WTC11 (cell line): ENCODE measurements at regions of chr1 and their contacts with region 1.

Region 1: DNA sequence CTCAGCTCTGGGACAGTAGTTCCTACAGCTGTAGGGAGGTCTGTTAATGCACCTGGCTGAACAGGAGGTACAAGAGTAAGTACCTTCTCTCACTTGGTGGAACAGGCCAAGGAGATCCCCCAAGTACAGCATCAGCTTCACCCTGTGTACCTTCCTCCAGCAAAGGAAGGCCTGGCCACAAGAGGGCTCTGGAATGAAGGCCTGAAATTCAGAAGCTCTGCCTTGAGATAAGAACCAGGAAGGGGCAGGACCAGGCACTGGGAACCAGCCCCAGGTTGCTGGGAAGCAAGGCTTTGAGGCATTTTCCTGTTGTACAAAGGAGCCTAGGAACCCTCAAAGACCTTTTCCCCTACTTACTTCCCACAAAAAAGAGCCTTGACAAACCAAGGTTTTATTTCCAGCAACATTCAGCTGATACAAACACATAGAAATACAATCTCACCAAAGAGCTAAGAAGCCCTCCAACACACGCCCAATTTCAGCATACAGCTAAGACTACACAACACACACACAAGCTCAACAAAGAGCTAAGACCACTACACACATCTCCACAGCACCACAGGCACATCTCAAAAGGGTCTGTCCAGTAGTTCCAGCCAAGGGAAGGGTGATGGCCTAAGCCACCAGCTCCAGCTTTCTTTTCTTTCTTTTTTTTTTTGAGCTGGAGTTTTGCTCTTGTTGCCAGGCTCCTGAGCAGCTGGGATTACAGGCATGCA is 23.5 kb downstream of the F11R start:
- DNase-seq: peak; percentile 64
- ATAC-seq: peak; percentile 93
- H3K4me3 Mint-ChIP-seq: no peak overlapping the region
- H3K27ac Mint-ChIP-seq: peak overlapping the region; percentile 63
- H3K4me1 Mint-ChIP-seq: peaks cover 5% of the 10 kb centered on the region
- H3K27me3 Mint-ChIP-seq: no peaks in the 10 kb centered on the region
- CTCF ChIP-seq: no peak

Region 2: GRCh38 chr1:160911441-160911840 is 86.0 kb before region 1 on chr1:
- CTCF ChIA-PET with region 1: no interaction called
- POLR2A ChIA-PET with region 1: no interaction called
- DNase-seq: no peak
- ATAC-seq: no peak
- H3K4me3 Mint-ChIP-seq: no peak overlapping the region
- H3K27ac Mint-ChIP-seq: no peak overlapping the region
- H3K4me1 Mint-ChIP-seq: peaks cover 22% of the 10 kb centered on the region
- H3K27me3 Mint-ChIP-seq: no peaks in the 10 kb centered on the region; the same call in 1 of the 2 replicates
- CTCF ChIP-seq: no peak

Region 3: GRCh38 chr1:161013488-161014230 is 16.2 kb after region 1 on chr1:
- CTCF ChIA-PET with region 1: interaction called, 11 read pairs
- POLR2A ChIA-PET with region 1: interaction called, 10 read pairs
- DNase-seq: peak; percentile 79
- ATAC-seq: peak; percentile 93
- H3K4me3 Mint-ChIP-seq: peak overlapping the region; percentile 57
- H3K27ac Mint-ChIP-seq: peak overlapping the region; percentile 98
- H3K4me1 Mint-ChIP-seq: peaks cover 63% of the 10 kb centered on the region
- H3K27me3 Mint-ChIP-seq: no peaks in the 10 kb centered on the region
- CTCF ChIP-seq: no peak

Region 4: GRCh38 chr1:161021165-161021960 is 23.9 kb after region 1 on chr1:
- CTCF ChIA-PET with region 1: interaction called, 40 read pairs
- POLR2A ChIA-PET with region 1: interaction called, 18 read pairs
- DNase-seq: peak; percentile 99
- ATAC-seq: peak; percentile 96
- H3K4me3 Mint-ChIP-seq: peak overlapping the region; percentile 87
- H3K27ac Mint-ChIP-seq: peak overlapping the region; percentile 100
- H3K4me1 Mint-ChIP-seq: peaks cover 50% of the 10 kb centered on the region
- H3K27me3 Mint-ChIP-seq: no peaks in the 10 kb centered on the region
- CTCF ChIP-seq: no peak

Region 5: DNA sequence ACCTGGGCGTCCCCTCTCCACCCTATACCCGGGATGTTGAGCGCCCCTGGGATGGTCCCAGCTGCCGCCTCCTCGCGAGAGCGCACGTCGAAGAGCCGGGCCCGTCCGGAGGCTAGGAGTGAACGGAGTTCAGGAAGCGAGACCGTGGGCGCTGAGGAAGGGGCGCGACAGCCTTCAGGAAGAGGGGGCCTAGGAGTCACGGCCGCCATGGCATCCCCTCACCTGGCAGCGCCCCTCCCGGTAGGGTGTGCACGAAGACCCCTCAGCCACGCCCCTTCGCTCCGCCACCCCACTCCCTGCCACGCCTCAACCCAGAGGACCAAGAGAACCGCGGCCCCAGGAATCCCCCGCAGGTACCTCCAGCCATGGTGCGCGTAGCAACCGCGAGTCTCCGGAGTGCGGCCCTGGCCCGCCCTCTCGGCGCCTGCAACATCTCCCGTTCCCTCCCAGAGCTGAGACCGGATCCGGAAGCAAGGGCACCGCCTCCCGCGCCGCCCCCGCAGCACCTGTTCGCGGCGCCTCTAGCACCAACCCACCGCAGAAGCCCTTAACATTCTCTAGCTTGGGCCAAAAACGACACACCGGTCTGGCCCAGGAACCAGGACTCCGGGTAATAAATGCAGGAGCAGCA is 41.2 kb after region 1 on chr1 and contains the start of gene TSTD1:
- CTCF ChIA-PET with region 1: interaction called, 22 read pairs
- POLR2A ChIA-PET with region 1: no interaction called
- DNase-seq: peak; percentile 81
- ATAC-seq: peak; percentile 77
- H3K4me3 Mint-ChIP-seq: peak within 1 kb of the TSS; percentile 86
- H3K27ac Mint-ChIP-seq: peak within 1 kb of the TSS; percentile 92
- H3K4me1 Mint-ChIP-seq: peaks cover 36% of the 10 kb centered on the region
- H3K27me3 Mint-ChIP-seq: no peaks in the 10 kb centered on the region
- CTCF ChIP-seq: no peak
- total RNA-seq, gene TSTD1: 74.5 to 107 TPM (median 100 TPM) in 3 replicates

Region 6: DNA sequence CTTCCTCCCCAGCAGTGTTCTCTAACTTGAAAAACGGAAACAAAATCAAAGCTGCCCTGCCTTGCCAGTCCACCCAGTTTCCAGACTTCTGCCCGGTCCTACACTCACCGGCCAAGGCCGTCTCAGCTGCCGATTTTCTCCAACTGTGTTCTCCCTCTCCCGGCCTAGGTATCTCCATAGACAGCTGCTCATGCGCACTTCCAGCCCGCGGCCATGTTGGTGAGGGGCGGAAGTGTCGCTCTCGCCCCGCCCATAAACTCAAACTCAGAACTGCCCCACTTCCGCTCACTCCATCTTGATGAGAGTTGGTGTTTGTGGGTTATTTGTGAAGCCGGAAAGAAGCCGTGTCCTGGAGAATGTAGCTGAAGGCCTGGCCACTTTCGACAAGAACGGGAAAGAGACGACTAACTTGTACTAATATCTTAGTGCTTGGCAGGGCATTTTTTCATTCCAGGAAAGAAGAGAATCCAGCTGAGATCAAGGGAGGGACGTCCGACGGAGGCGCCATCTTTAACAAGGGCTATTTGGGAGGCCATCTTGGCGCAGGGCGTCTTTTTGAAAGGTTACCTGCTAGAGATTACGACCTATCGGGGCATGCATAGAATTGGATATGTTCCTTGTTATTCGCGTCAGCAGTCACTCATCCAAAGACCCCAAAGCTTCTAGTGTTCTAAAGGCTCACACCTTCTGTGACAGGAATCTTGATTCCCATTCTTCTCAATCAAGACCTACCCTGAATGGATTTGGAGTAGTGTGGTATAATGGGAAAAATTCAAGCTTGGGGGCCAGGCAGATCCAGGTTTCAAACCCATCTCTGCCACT is 48.5 kb after region 1 on chr1 and contains the start of gene USF1:
- CTCF ChIA-PET with region 1: interaction called, 12 read pairs
- POLR2A ChIA-PET with region 1: interaction called, 5 read pairs
- DNase-seq: peak; percentile 92
- ATAC-seq: peak; percentile 77
- H3K4me3 Mint-ChIP-seq: peak within 1 kb of the TSS; percentile 97
- H3K27ac Mint-ChIP-seq: peak within 1 kb of the TSS; percentile 100
- H3K4me1 Mint-ChIP-seq: peaks cover 24% of the 10 kb centered on the region
- H3K27me3 Mint-ChIP-seq: peaks cover 38% of the 10 kb centered on the region
- CTCF ChIP-seq: no peak
- total RNA-seq, gene USF1: 55.9 to 65.6 TPM (median 57.8 TPM) in 3 replicates

Region 7: GRCh38 chr1:161054805-161055204 is 57.3 kb after region 1 on chr1:
- CTCF ChIA-PET with region 1: interaction called, 10 read pairs
- POLR2A ChIA-PET with region 1: interaction called, 5 read pairs
- DNase-seq: no peak
- ATAC-seq: no peak
- H3K4me3 Mint-ChIP-seq: no peak overlapping the region
- H3K27ac Mint-ChIP-seq: no peak overlapping the region
- H3K4me1 Mint-ChIP-seq: no peaks in the 10 kb centered on the region
- H3K27me3 Mint-ChIP-seq: peaks cover 10% of the 10 kb centered on the region
- CTCF ChIP-seq: 0 out of 2 replicates have a peak, but pooled peaks have one; percentile 17